ENCODE measurements at regions of chr19 and their contacts with region 1.

Region 1: DNA sequence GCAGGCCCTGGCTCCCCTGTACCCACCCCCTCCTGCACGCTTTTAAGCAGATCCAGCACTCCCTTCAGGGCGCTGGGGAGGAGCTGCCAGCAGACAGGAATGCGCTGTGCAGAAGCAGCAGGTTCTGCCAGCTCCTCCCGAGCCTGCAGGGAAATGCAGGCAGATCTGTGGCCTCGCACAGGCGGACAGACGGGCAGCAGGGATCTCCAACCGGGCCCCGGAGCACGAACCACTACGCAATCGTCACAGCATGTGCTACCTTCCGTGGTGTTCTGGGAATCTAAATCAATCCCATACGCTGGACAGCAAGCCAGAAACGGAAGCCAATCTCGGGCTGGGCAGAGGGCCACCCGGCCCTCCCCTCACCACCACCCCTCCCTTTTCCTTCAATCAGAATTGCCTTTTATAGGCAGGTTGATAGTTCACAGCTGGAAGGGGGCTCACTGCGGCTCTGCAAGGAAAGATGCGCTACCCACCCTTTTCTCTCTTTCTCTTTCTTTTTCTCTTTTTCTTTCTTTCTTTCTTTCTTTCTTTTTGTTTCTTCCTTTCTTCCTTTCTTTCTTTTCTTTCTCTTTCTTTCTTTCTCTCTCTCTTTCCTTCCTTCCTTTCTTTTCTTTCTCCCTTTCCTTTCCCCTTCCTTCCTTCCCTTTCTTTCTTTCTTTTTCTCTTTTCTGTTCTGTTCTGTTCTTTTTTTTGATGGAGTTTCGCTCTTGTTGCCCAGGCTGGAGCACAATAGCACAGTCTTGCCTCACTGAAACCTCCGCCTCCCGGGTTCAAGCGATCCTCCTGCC is 99.9 kb downstream of the GNG7 start:
- DNase-seq: no peak
- H3K4me3 Mint-ChIP-seq: no peak overlapping the region
- H3K27ac Mint-ChIP-seq: no peak overlapping the region
- H3K4me1 Mint-ChIP-seq: peaks cover 16% of the 10 kb centered on the region
- H3K27me3 Mint-ChIP-seq: peaks cover 3% of the 10 kb centered on the region

Region 2: DNA sequence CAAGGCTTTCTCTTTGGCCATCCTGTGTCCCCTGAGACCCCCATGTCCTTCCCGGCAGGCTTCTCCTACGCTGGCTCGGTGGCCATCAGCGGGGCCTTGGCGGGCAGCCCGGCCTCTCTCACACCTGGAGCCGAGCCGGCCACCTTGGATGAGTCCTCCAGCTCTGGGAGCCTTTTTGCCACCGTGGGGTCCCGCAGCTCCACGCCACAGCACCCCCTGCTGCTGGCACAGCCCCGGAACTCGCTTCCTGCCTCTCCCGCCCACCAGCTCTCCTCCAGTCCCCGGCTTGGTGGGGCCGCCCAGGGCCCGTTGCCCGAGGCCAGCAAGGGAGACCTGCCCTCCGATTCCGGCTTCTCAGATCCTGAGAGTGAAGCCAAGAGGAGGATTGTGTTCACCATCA is 380.7 kb before region 1 on chr19:
- CTCF ChIA-PET with region 1: no interaction called
- intact Hi-C with region 1: no loop called
- DNase-seq: no peak
- H3K4me3 Mint-ChIP-seq: no peak overlapping the region
- H3K27ac Mint-ChIP-seq: no peak overlapping the region
- H3K4me1 Mint-ChIP-seq: no peaks in the 10 kb centered on the region
- H3K27me3 Mint-ChIP-seq: no peaks in the 10 kb centered on the region

Region 3: GRCh38 chr19:2552859-2553258 is 49.7 kb before region 1 on chr19:
- CTCF ChIA-PET with region 1: no interaction called
- intact Hi-C with region 1: loop called (anchors 2 kb)
- DNase-seq: peak; percentile 78
- H3K4me3 Mint-ChIP-seq: peak overlapping the region; percentile 64
- H3K27ac Mint-ChIP-seq: peak overlapping the region; percentile 81
- H3K4me1 Mint-ChIP-seq: peaks cover 17% of the 10 kb centered on the region
- H3K27me3 Mint-ChIP-seq: no peaks in the 10 kb centered on the region

Region 4: GRCh38 chr19:2561895-2562294 is 40.7 kb before region 1 on chr19:
- CTCF ChIA-PET with region 1: interaction called, 3 read pairs
- intact Hi-C with region 1: loop called (anchors 1 kb)
- DNase-seq: peak; percentile 89
- H3K4me3 Mint-ChIP-seq: peak overlapping the region; percentile 74
- H3K27ac Mint-ChIP-seq: peak overlapping the region; percentile 91
- H3K4me1 Mint-ChIP-seq: peaks cover 26% of the 10 kb centered on the region
- H3K27me3 Mint-ChIP-seq: no peaks in the 10 kb centered on the region

Region 5: DNA sequence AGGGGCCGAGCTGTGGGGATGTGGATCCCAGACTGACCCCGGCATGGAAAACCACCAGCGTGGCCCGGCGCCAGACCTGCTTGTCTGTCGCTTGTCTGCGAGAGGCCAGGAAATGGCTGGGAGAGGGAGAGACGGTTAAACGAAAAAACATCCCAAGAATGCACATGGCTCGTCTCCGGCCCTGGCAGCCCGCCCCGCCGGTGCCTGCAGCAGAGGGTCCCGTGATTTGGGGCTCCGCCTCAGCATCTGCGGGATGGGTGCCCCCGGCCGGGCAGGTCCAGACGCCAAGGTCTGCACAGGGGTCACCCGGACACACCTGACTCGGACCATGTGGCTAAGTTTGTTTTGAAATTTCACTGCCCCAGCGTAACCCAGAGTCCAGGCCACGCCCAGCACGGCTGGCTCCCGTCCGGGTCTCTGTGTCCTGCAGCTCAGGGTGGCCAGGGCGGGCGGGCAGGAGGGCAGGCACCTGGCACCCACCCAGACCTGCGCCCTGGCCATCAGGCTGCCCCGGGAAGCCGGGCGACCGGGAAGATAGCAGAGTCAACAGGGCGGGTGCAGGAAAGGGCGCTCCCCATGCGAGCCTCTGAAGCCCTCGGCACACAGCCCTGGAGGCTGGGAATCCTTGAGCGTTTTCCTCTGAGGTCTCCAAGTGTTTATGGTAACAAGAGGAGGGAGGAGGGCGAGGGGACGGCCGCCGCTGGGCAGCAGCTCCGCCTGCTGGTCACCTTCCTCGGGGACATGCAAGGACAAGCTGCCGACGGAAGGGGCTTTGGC is 23.5 kb before region 1 on chr19:
- CTCF ChIA-PET with region 1: no interaction called
- intact Hi-C with region 1: loop called (anchors 2 kb)
- DNase-seq: peak; percentile 80
- H3K4me3 Mint-ChIP-seq: peak overlapping the region; percentile 53
- H3K27ac Mint-ChIP-seq: no peak overlapping the region
- H3K4me1 Mint-ChIP-seq: peaks cover 3% of the 10 kb centered on the region
- H3K27me3 Mint-ChIP-seq: peaks cover 3% of the 10 kb centered on the region

Region 6: GRCh38 chr19:2618611-2619010 is 16.0 kb after region 1 on chr19:
- CTCF ChIA-PET with region 1: interaction called, 64 read pairs
- intact Hi-C with region 1: loop called (anchors 1 kb)
- DNase-seq: peak; percentile 97
- H3K4me3 Mint-ChIP-seq: peak overlapping the region; percentile 53
- H3K27ac Mint-ChIP-seq: peak overlapping the region; percentile 91
- H3K4me1 Mint-ChIP-seq: peaks cover 72% of the 10 kb centered on the region
- H3K27me3 Mint-ChIP-seq: no peaks in the 10 kb centered on the region

Measured in activated naive CD4-positive, alpha-beta T cell treated with anti-CD3 and anti-CD28 coated beads for 36 hours (primary cell).